ENCODE measurements at regions of chr3 and their contacts with region 1.

Region 1: GRCh38 chr3:125019271-125019670 is 36.5 kb downstream of the HEG1 start:
- DNase-seq: no peak
- ATAC-seq: no peak; the same call in 1 of the 2 replicates
- H3K4me3 ChIP-seq: no peak overlapping the region
- H3K27ac ChIP-seq: no peak overlapping the region
- H3K4me1 ChIP-seq: peaks cover 14% of the 10 kb centered on the region; the same call in 1 of the 2 replicates
- H3K27me3 ChIP-seq: no peaks in the 10 kb centered on the region
- CTCF ChIP-seq: no peak

Region 2: DNA sequence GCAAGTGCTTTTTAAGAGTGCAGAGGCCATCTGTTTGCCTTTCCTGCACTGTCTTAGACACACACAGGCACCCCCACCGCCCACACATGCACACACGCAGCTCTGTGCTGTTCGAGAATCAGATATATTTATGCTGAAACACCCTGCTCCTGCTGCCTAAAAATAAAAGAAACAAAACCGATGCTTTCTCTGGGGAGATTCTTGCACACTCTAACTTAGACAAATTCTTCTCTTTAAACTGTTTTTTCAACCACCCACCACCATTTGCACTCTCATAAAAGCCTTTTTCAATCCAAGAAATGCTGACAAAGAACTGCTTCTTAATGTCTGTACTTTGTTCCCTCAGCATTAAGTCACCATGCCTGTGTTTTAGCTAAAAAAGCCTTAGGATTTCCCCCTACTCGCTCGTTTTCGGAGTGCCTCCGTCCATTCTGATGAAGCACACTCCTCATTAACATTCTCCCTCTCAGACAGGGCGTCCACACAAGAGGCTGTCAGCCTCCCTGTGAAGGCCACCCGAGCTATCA is 167.1 kb after region 1 on chr3:
- CTCF ChIA-PET with region 1: no interaction called
- POLR2A ChIA-PET with region 1: interaction called, 11 read pairs
- in situ Hi-C with region 1: no loop called
- intact Hi-C with region 1: no loop called
- DNase-seq: no peak
- ATAC-seq: no peak
- H3K4me3 ChIP-seq: no peak overlapping the region
- H3K27ac ChIP-seq: no peak overlapping the region
- H3K4me1 ChIP-seq: no peaks in the 10 kb centered on the region
- H3K27me3 ChIP-seq: no peaks in the 10 kb centered on the region
- CTCF ChIP-seq: no peak

Region 3: DNA sequence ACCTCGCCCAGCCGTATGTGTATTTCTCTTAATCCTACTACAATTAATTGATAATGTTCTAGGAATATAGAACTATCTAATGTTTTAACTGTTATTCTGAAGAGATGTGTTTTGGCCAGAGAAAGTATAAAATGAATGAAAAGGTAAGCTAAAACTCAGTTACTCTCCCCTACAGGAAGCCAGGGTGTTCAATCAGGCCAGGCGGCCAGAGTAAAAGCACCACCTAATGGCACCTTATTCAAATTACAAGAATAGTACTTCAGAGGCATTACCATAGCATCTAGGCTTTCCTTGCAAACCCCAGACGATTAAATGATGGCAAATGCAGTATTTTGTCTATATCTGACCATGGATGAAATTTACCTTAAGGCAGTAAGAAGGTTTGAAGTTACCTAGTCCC is 182.9 kb after region 1 on chr3:
- CTCF ChIA-PET with region 1: no interaction called
- POLR2A ChIA-PET with region 1: no interaction called
- in situ Hi-C with region 1: no loop called
- intact Hi-C with region 1: no loop called
- DNase-seq: no peak
- ATAC-seq: peak; percentile 91
- H3K4me3 ChIP-seq: no peak overlapping the region
- H3K27ac ChIP-seq: no peak overlapping the region
- H3K4me1 ChIP-seq: no peaks in the 10 kb centered on the region
- H3K27me3 ChIP-seq: no peaks in the 10 kb centered on the region
- CTCF ChIP-seq: peak; percentile 72